Ovary (tissue), 10 donors: ENCODE measurements at regions of chr16 and their contacts with region 1.

Region 1: GRCh38 chr16:1705688-1706385 is at the start of gene MAPK8IP3:
- DNase-seq: peak; percentile 88 to 98 (median 93)
- H3K4me3 ChIP-seq: peak within 1 kb of the TSS; percentile 91
- H3K27ac ChIP-seq: peak within 1 kb of the TSS in 1 of 2 donors; percentile 85
- H3K4me1 ChIP-seq: peaks cover 14% of the 10 kb centered on the region
- H3K27me3 ChIP-seq: no peaks in the 10 kb centered on the region
- CTCF ChIP-seq: peak; percentile 91 to 100 (median 100)
- EP300 ChIP-seq: no peak
- POLR2A ChIP-seq: peak; percentile 93
- total RNA-seq, gene MAPK8IP3: 50.3 to 117 (median 75.5) TPM

Region 2: DNA sequence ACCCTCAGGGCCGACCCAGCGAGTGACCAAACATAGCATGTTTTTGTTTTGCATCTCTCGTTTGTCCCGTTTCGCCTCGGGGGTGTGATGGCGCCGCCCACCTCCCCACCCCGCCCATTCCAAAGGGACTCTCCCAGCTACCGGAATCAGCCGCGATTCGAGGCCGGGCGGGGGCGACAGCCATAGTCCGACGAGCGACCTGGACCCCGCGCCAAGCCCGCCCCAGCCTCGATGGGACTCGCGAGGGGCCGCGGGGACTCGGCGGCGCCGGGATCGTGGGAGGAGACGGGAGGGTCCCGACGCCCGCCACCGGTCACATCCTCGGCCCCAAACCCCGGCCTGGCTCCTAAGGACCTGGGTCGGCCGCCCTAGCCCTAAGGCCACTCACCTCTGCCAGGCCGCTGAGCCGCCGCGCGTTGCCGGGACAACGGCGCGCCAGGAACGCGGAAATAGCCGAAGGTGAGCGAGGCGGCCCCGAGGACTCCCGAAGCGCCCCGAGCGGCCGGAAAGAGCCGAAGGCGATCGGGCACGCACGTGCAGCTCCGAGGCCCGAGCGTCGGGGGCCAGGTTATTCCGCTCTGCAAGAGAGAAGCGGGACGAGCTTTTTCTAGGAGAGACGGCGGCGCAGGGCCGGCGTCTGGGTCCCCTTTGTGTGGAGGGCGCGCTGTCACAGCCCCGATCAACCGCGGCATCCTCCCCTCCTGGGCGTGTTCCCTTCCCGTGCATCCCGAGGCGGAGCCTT is 95.4 kb before region 1 on chr16:
- intact Hi-C with region 1: loop called in 2 of 4 experiments (anchors 5 to 10 kb)
- DNase-seq: peak; percentile 84 to 96 (median 90)
- H3K4me3 ChIP-seq: peak overlapping the region; percentile 57
- H3K27ac ChIP-seq: peak overlapping the region; percentile 24 to 67
- H3K4me1 ChIP-seq: peaks cover 14% of the 10 kb centered on the region
- H3K27me3 ChIP-seq: no peaks in the 10 kb centered on the region
- CTCF ChIP-seq: no peak
- EP300 ChIP-seq: no peak
- POLR2A ChIP-seq: no peak